Sigmoid colon (tissue), 7 donors: ENCODE measurements at regions of chr20 and their contacts with region 1.

Region 1: DNA sequence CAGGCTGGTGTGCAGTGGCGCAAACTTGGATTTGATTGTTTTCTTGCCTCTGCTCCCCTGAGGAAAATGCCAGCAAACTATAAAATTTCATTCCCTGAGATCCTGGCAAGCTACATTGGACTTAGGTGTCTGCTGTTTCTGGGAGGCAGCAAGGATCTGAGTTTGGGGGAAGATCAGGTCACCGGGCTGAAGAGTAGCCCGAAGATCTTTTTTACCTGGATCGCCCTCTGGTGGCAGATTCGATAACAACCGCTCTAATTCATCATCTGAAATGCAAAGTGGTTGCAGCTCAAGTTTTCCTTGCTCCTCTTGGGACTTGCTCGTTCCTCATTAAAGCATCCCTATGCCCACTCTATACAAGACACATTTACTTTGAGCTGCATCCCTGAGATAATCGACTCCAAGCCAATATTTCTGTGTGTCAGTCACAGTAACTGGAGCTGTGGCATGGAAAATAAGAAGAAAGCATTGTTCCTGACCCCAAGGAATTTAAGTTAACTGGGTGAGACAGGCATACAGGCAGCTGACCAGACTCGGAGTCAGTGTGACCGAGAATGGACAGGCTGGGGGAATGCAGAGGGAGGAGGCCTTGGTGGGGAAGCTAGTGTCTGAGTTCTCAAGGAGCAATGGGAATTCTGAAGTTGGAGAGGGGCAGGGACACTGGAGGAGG is 131.8 kb upstream of the PROKR2 start:
- DNase-seq: no peak
- H3K4me3 ChIP-seq: no peak overlapping the region
- H3K27ac ChIP-seq: no peak overlapping the region
- H3K4me1 ChIP-seq: no peaks in the 10 kb centered on the region
- H3K27me3 ChIP-seq: peaks cover 0 to 4% (median 0%) of the 10 kb centered on the region in 3 donors
- CTCF ChIP-seq: peak in 3 of 4 experiments; percentile 16 to 55 (median 32)
- EP300 ChIP-seq: no peak
- POLR2A ChIP-seq: no peak

Region 2: GRCh38 chr20:5205348-5206210 is 243.0 kb before region 1 on chr20:
- intact Hi-C with region 1: loop called (anchors 5 kb)
- DNase-seq: peak; percentile 80
- H3K4me3 ChIP-seq: no peak overlapping the region
- H3K27ac ChIP-seq: no peak overlapping the region
- H3K4me1 ChIP-seq: peaks cover 0 to 6% (median 3%) of the 10 kb centered on the region in 4 donors
- H3K27me3 ChIP-seq: no peaks in the 10 kb centered on the region
- CTCF ChIP-seq: peak; percentile 41 to 76 (median 58)
- EP300 ChIP-seq: no peak
- POLR2A ChIP-seq: no peak